ENCODE measurements at regions of chr12 and their contacts with region 1.

Region 1: DNA sequence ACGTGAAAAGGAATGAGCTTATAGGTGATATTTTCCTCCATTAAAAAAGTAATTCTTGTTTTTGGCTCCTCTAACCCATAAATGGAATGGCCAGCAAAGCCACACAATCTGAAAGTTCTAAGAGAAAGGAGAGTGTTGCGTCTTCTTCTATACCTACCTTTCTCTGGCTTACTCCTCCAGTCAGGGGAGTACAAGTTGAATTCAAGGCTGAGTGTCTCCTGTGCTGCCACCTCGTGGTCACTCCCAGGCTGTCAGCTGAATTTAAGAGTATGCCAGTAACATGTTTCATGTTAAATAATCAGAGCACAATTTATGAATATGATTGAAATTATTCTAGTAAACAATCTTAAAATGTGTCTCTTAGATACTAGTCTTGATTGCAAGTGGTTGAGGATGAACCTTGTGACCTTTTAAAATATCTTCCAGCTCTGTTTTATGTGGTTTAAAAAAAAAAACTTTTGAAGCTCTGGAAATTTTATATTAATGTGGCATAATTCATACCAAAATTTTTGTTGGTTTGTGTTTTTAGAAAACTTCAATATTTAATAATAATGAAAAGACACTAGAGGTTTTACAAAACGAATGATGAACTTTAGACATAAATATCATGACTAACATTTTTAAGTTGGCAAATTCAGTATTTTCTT is 31.7 kb downstream of the PTHLH start:
- DNase-seq: peak; percentile 81
- H3K4me3 Mint-ChIP-seq: no peak overlapping the region
- H3K27ac Mint-ChIP-seq: no peak overlapping the region
- H3K4me1 Mint-ChIP-seq: no peaks in the 10 kb centered on the region
- H3K27me3 Mint-ChIP-seq: peaks cover 4% of the 10 kb centered on the region

Region 2: DNA sequence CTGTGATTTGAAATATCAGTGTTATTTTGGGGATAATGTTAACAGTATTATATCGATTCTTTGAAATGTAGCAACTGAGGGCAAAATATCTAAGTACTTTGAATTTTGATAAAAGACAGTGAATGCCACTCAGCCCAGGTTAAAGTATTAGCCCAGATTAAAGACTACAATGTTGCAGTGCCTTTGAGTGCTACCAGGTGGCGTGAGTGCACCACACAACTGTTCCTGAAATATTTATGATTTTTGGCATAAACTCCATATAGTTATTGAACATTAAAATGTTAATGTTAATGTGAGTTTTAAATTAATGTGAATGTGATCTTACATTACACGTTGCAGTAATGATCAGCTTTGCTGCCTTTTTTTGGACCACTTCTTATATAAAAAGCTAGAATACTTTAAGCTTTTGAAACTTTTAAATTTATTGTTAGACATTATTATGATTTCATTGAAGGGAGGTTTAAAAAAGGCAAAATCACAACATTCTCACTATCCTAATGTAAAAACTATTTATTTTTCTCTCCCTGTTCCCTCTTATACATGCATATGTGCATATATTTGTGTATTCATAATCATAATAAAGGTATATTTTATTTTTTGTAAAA is 207.7 kb before region 1 on chr12:
- CTCF ChIA-PET with region 1: interaction called, 52 read pairs
- DNase-seq: peak; percentile 52
- H3K4me3 Mint-ChIP-seq: no peak overlapping the region
- H3K27ac Mint-ChIP-seq: no peak overlapping the region
- H3K4me1 Mint-ChIP-seq: no peaks in the 10 kb centered on the region
- H3K27me3 Mint-ChIP-seq: no peaks in the 10 kb centered on the region

Measured in activated naive CD4-positive, alpha-beta T cell treated with anti-CD3 and anti-CD28 coated beads, Interleukin-2, amount 10 ng/mL, durations not matched to agents 7 days and 5 days (primary cell).